Caco-2 (cell line): ENCODE measurements at regions of chr2 and their contacts with region 1.

Region 1: DNA sequence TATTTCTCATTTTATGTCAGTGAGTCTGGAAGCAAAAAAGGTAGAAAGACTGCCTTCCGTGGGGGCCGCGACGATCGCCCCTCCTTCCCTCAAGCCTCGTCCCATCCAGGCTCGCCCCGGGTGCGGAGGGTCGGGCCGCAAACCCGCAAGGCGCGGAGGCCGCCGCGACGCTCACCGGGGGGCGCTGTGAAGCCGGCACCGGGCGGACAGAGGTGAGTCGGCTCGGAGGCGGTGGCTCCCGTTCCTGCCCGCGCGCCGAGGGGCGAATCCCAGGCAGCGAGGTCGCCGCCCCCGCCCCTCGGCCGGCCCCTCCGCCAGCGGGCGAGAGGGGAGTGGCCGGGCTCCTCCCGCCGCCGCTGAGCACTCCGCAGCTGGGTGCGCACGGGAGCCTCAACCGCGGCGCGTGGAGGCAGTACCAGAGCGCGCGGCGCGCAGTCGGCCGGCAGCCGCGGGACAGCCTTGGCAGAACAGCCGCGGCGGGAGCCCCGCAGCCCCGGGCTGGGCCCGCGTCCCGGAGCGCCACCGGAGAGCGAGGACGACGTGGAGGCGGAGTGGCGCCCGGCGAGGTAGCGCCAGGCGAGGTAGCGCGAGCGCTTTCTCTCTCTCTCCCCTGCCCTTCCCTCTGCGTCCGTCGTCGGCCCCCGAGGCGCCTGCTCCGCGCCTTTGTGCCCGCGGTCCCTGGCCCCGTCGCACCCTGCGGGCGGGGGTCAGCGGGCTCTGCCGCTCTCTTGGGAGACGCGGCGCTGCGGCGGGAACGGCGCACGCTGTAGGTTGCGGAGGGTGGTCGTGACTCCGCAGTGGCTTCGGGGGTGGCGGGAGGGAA is at the start of gene MYO1B:
- DNase-seq: peak; percentile 89 to 96
- H3K4me3 ChIP-seq: peak within 1 kb of the TSS; percentile 85
- H3K4me3 Mint-ChIP-seq: peak within 1 kb of the TSS; percentile 94
- H3K27ac Mint-ChIP-seq: peak within 1 kb of the TSS; percentile 86
- H3K4me1 ChIP-seq: peaks cover 29% of the 10 kb centered on the region
- H3K4me1 Mint-ChIP-seq: peaks cover 27% of the 10 kb centered on the region
- H3K27me3 ChIP-seq: no peaks in the 10 kb centered on the region
- H3K27me3 Mint-ChIP-seq: no peaks in the 10 kb centered on the region
- CTCF ChIP-seq: peak; percentile 66 to 78
- total RNA-seq, gene MYO1B: 80.3 and 83.4 TPM in 2 replicates

Region 2: GRCh38 chr2:191218292-191218898 is 26.9 kb before region 1 on chr2:
- CTCF ChIA-PET with region 1: interaction called, 4 read pairs
- POLR2A ChIA-PET with region 1: no interaction called
- intact Hi-C with region 1: loop called (anchors 2 kb)
- DNase-seq: peak; percentile 63 to 65
- H3K4me3 ChIP-seq: no peak overlapping the region
- H3K4me3 Mint-ChIP-seq: no peak overlapping the region
- H3K27ac Mint-ChIP-seq: no peak overlapping the region
- H3K4me1 ChIP-seq: peaks cover 27% of the 10 kb centered on the region
- H3K4me1 Mint-ChIP-seq: peaks cover 15% of the 10 kb centered on the region
- H3K27me3 ChIP-seq: no peaks in the 10 kb centered on the region
- H3K27me3 Mint-ChIP-seq: no peaks in the 10 kb centered on the region
- CTCF ChIP-seq: peak; percentile 55 to 61

Region 3: GRCh38 chr2:191274413-191274815 is 29.2 kb after region 1 on chr2:
- CTCF ChIA-PET with region 1: interaction called, 4 read pairs
- POLR2A ChIA-PET with region 1: no interaction called
- intact Hi-C with region 1: loop called (anchors 1 kb)
- DNase-seq: no peak
- H3K4me3 ChIP-seq: no peak overlapping the region
- H3K4me3 Mint-ChIP-seq: no peak overlapping the region
- H3K27ac Mint-ChIP-seq: no peak overlapping the region
- H3K4me1 ChIP-seq: no peaks in the 10 kb centered on the region
- H3K4me1 Mint-ChIP-seq: no peaks in the 10 kb centered on the region
- H3K27me3 ChIP-seq: no peaks in the 10 kb centered on the region
- H3K27me3 Mint-ChIP-seq: no peaks in the 10 kb centered on the region
- CTCF ChIP-seq: no peak

Region 4: GRCh38 chr2:191302459-191303139 is 57.3 kb after region 1 on chr2:
- CTCF ChIA-PET with region 1: interaction called, 7 read pairs
- POLR2A ChIA-PET with region 1: no interaction called
- intact Hi-C with region 1: loop called (anchors 1 kb)
- DNase-seq: peak; percentile 56 to 59
- H3K4me3 ChIP-seq: no peak overlapping the region
- H3K4me3 Mint-ChIP-seq: no peak overlapping the region
- H3K27ac Mint-ChIP-seq: peak overlapping the region; percentile 18
- H3K4me1 ChIP-seq: peaks cover 26% of the 10 kb centered on the region
- H3K4me1 Mint-ChIP-seq: peaks cover 37% of the 10 kb centered on the region
- H3K27me3 ChIP-seq: no peaks in the 10 kb centered on the region
- H3K27me3 Mint-ChIP-seq: no peaks in the 10 kb centered on the region
- CTCF ChIP-seq: peak; percentile 58 to 65

Region 5: DNA sequence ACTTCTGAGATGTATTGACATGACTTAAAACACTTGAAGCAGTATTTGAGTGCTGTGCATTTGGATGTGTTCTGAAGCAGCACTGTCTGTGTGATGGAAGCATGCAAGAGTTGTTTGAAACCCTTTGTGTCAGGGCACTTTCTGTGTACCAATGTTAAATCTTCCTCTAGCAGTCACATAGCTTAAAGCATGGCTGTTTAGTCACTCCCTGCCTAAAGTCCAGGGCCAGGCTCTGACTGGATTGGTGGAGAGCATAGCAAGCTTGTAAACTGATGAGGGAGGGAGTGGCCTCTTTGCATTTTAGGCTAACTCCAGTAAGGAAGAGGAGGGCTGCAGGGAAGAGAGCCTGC is 73.4 kb after region 1 on chr2:
- CTCF ChIA-PET with region 1: interaction called, 6 read pairs
- POLR2A ChIA-PET with region 1: no interaction called
- intact Hi-C with region 1: loop called (anchors 1 kb)
- DNase-seq: peak; percentile 85 to 92
- H3K4me3 ChIP-seq: no peak overlapping the region
- H3K4me3 Mint-ChIP-seq: peak overlapping the region; percentile 60
- H3K27ac Mint-ChIP-seq: peak overlapping the region; percentile 78
- H3K4me1 ChIP-seq: peaks cover 48% of the 10 kb centered on the region
- H3K4me1 Mint-ChIP-seq: peaks cover 35% of the 10 kb centered on the region
- H3K27me3 ChIP-seq: no peaks in the 10 kb centered on the region
- H3K27me3 Mint-ChIP-seq: no peaks in the 10 kb centered on the region
- CTCF ChIP-seq: no peak

Region 6: DNA sequence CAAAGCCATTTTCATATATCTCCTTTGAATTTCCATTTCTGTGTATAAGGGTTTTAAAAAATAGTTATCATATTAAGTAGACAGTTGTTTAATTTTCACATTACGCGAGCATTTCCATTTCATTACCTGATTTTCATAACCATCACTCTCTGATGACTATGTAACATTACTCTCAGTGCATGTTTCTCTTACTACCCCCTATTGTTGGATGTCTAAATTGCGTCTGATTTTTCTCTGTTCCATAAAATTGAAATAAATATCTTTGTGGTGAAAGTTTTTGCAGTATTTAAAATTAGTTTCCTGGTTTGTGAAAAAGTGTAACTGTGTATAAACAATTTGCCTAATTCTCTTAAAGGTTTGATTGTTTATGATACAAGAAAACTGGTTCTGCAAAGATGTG is 123.8 kb after region 1 on chr2:
- CTCF ChIA-PET with region 1: no interaction called
- POLR2A ChIA-PET with region 1: no interaction called
- intact Hi-C with region 1: loop called (anchors 1 kb)
- DNase-seq: no peak
- H3K4me3 ChIP-seq: no peak overlapping the region
- H3K4me3 Mint-ChIP-seq: no peak overlapping the region
- H3K27ac Mint-ChIP-seq: no peak overlapping the region
- H3K4me1 ChIP-seq: no peaks in the 10 kb centered on the region
- H3K4me1 Mint-ChIP-seq: peaks cover 6% of the 10 kb centered on the region
- H3K27me3 ChIP-seq: no peaks in the 10 kb centered on the region
- H3K27me3 Mint-ChIP-seq: no peaks in the 10 kb centered on the region
- CTCF ChIP-seq: peak in 1 of 2 experiments; percentile 15